Endothelial cell of umbilical vein (primary cell): ENCODE measurements at regions of chr1 and their contacts with region 1.

Region 1: GRCh38 chr1:54310439-54311328 is 95.5 kb downstream of the SSBP3 start:
- DNase-seq: peak; percentile 68
- H3K4me3 ChIP-seq: no peak overlapping the region
- H3K27ac ChIP-seq: no peak overlapping the region
- H3K4me1 ChIP-seq: peaks cover 12% of the 10 kb centered on the region
- H3K27me3 ChIP-seq: no peaks in the 10 kb centered on the region
- CTCF ChIP-seq: peak; percentile 73 to 79
- POLR2A ChIP-seq: no peak

Region 2: GRCh38 chr1:54324251-54325140 is 13.8 kb after region 1 on chr1:
- CTCF ChIA-PET with region 1: interaction called, 10 read pairs
- POLR2A ChIA-PET with region 1: interaction called, 4 read pairs
- dilution Hi-C with region 1: no loop called
- intact Hi-C with region 1: no loop called
- DNase-seq: no peak
- H3K4me3 ChIP-seq: no peak overlapping the region
- H3K27ac ChIP-seq: no peak overlapping the region
- H3K4me1 ChIP-seq: peaks cover 35% of the 10 kb centered on the region
- H3K27me3 ChIP-seq: no peaks in the 10 kb centered on the region
- CTCF ChIP-seq: no peak
- POLR2A ChIP-seq: no peak

Region 3: DNA sequence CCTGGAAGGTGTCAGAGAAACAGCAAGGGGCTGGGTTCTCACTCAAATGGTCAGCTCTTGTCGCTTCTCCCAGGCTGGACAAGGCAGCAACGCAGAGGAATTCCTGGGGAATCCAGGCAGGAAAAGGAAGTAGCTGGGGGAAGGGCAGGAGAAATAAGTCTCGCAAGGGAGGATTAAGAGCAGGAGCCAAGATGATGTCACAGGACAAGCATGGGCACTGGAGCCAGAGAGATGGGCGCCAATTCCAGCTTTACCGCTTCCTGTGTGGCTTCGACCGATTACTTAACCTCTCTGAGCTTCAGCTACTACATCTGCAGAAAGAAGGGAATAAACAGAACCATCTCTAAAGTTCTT is 25.0 kb after region 1 on chr1:
- CTCF ChIA-PET with region 1: interaction called, 17 read pairs
- POLR2A ChIA-PET with region 1: interaction called, 3 read pairs
- dilution Hi-C with region 1: no loop called
- intact Hi-C with region 1: loop called (anchors 1 kb)
- DNase-seq: peak; percentile 90
- H3K4me3 ChIP-seq: peak overlapping the region in 1 of 3 experiments; percentile 18
- H3K27ac ChIP-seq: peak overlapping the region; percentile 89
- H3K4me1 ChIP-seq: peaks cover 31% of the 10 kb centered on the region
- H3K27me3 ChIP-seq: no peaks in the 10 kb centered on the region
- CTCF ChIP-seq: no peak
- POLR2A ChIP-seq: peak; percentile 75

Region 4: GRCh38 chr1:54355931-54356679 is 45.4 kb after region 1 on chr1:
- CTCF ChIA-PET with region 1: interaction called, 4 read pairs
- POLR2A ChIA-PET with region 1: no interaction called
- dilution Hi-C with region 1: no loop called
- intact Hi-C with region 1: loop called (anchors 1 kb)
- DNase-seq: no peak
- H3K4me3 ChIP-seq: no peak overlapping the region
- H3K27ac ChIP-seq: no peak overlapping the region
- H3K4me1 ChIP-seq: peaks cover 10% of the 10 kb centered on the region
- H3K27me3 ChIP-seq: no peaks in the 10 kb centered on the region
- CTCF ChIP-seq: no peak
- POLR2A ChIP-seq: no peak

Region 5: GRCh38 chr1:54384911-54385726 is 74.4 kb after region 1 on chr1:
- CTCF ChIA-PET with region 1: interaction called, 11 read pairs
- POLR2A ChIA-PET with region 1: interaction called, 4 read pairs
- dilution Hi-C with region 1: no loop called
- intact Hi-C with region 1: no loop called
- DNase-seq: peak; percentile 28
- H3K4me3 ChIP-seq: no peak overlapping the region
- H3K27ac ChIP-seq: no peak overlapping the region
- H3K4me1 ChIP-seq: peaks cover 18% of the 10 kb centered on the region
- H3K27me3 ChIP-seq: no peaks in the 10 kb centered on the region
- CTCF ChIP-seq: no peak
- POLR2A ChIP-seq: no peak